GM10248 (cell line): ENCODE measurements at regions of chr19 and their contacts with region 1.

Region 1: GRCh38 chr19:11558881-11559828 is at the start of gene ELOF1:
- DNase-seq: peak; percentile 98
- CTCF ChIP-seq: no peak

Region 2: GRCh38 chr19:11435058-11435832 is 123.9 kb before region 1 on chr19 and contains the starts of genes ODAD3 and PRKCSH:
- CTCF ChIA-PET with region 1: no interaction called
- POLR2A ChIA-PET with region 1: no interaction called
- DNase-seq: peak; percentile 99
- CTCF ChIP-seq: peak; percentile 78

Region 3: DNA sequence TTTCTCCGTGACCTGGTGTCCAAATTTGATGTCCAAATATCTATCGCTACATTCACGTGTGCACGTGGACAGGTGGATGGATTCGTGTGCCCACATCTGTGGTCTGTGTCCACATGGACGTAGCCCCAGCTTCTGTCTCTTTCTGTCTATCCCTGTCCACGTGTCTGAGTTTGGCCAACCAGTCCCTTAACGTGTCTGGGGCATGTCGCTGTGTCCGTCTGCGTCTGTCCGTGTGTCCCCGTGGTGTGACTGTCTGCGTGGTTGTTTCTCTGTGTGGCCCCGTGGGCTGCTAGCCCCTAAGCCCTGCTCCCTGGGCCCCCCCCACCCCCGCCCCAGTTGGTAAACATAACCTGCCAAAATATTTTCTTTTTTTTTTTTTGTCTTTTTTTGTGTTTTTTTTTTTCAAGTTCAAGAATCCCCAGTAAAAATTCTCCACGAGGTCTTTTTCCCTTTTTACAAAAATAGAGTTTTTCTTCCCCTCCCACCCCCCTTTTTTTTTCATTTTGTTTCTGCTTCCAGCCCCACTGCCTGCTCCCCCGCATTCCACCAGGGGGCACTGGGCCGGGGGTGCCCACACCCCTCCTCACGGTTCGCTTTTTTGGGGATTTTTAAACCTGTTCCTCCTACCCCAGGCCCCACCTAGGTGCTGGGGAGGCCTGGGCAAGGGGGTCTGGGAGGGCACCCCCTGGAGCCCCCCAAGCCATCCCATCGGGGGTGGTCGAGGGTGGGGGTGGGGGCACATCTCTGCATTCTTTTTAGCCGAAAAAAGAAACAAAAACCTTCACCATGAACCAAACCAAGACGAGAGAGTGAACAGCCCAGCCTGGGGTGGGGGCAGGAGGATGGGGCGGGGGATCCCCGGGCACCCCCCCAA is 105.5 kb before region 1 on chr19:
- CTCF ChIA-PET with region 1: no interaction called
- POLR2A ChIA-PET with region 1: no interaction called
- DNase-seq: peak; percentile 60
- CTCF ChIP-seq: peak; percentile 50

Region 4: DNA sequence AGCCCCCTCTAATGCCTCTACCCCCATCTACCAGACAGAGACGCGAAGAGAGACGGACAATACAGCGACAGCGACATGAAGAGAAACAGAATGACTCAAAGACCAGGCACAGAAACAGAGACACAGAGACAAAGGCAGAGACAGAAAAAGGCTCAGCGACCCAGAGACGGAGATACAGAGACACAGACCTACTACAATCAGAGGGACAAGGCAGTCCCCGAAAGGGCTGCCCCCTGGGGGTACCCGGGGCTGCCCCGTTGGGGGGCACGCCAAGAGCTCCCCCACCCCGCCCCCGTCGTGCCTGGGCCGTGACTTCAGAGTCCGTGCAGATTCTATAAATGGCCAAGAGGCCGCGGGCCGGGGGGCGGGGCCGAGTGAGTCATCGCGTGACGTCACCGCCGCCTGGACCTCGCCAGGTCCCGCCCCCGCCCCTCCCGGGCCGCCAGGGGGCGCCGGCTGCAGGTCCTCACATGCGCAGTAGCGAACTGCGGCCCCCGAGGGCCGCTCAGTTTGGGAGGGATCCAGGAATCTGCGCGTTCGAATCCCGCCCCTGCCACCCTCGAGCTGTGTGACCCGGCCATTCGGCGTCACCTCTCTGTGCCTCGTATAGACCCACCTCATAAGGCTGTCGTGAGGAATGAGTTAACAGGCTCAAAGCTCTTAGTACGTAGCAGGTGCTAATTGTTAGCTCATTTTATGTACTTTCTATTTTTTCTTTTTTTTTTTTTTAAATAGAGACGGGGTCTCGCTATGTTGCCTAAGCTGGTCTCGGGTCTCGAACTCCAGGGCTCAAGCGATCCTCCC is 23.2 kb before region 1 on chr19:
- CTCF ChIA-PET with region 1: interaction called, 21 read pairs
- POLR2A ChIA-PET with region 1: no interaction called
- DNase-seq: peak; percentile 96
- CTCF ChIP-seq: peak; percentile 78

Region 5: GRCh38 chr19:11574689-11575088 is 15.5 kb after region 1 on chr19:
- CTCF ChIA-PET with region 1: interaction called, 37 read pairs
- POLR2A ChIA-PET with region 1: no interaction called
- DNase-seq: no peak
- CTCF ChIP-seq: no peak

Region 6: GRCh38 chr19:11581740-11582139 is 22.6 kb after region 1 on chr19:
- CTCF ChIA-PET with region 1: interaction called, 38 read pairs
- POLR2A ChIA-PET with region 1: no interaction called
- DNase-seq: peak; percentile 75
- CTCF ChIP-seq: no peak

Region 7: GRCh38 chr19:11587302-11587974 is 28.3 kb after region 1 on chr19:
- CTCF ChIA-PET with region 1: interaction called, 38 read pairs
- POLR2A ChIA-PET with region 1: no interaction called
- DNase-seq: peak; percentile 83
- CTCF ChIP-seq: peak; percentile 99

Region 8: DNA sequence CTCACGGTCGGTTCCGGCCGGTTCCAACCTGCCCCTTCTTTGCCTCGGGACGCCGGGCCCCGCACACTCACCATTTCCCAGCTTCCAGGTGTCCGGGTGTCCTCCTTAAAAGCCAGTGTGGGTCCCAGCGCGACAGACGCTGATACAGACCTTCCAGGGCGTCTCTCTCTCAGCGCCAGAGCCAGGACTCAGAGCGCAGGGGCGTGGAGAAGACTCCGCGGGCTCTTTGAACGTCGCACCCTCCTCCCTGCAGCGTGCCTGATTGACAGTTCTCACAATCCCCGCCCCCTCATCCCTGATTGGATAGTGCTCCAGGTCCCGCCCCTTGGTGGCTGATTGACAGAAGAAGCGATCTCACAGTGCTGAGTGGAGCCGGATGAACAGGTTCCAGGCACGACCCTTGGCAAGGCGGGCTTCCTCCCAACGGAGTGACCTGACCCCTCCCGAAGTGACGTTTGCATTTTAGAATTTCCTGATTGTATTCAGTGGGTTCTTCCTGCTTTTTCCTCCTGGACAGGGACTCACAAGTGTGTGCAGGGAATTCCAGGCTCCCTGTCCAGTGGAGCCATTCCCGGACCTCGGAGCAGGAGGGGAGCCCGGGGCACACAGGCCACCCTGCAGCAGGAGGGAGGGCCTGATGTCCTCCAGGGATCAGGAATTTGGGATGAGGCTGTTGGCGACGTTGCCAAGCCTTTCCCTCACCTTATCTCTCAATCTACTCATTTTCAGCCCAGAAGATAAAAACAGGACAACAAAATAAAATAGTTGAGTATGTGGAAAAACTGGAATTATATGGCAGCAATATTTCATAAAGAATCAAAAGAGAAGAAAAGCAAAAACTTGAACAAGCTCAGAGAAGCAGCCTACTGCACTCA is 179.8 kb after region 1 on chr19 and contains the start of gene ZNF823:
- CTCF ChIA-PET with region 1: no interaction called
- POLR2A ChIA-PET with region 1: no interaction called
- DNase-seq: peak; percentile 95
- CTCF ChIP-seq: no peak